ENCODE measurements at regions of chr7 and their contacts with region 1.

Region 1: DNA sequence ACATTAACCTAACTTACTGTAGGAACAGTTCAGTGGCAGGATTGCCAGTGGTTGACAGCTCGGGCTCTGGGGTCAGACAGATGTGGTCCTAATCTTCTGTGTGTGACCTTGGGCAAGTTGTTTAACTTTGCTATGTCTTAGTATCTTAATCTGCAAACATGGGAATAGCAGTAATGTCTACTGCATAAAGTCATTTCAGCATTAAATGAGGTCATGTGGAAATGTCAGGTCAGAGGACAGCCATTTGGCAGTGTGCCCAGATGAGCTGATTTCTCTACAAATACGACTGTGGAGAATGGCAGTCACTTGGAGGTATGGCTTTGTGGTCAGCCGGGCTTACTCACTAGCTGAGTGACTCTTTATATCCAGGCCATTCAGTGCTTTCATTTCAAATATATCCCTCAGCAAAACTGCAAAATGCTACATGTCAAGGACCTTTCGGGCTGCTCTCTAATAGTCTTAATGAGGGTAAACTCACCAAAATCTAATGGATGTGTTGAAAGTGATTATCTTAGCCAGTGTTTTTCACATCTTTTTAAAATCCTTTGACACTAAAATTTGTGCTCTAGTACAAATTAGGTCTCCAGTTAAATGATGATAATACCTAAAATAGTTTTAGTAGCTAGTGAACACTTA is 171.4 kb downstream of the ST7 start:
- DNase-seq: peak; percentile 79 to 85
- ATAC-seq: peak; percentile 97

Region 2: GRCh38 chr7:116929914-116930913 is 194.5 kb before region 1 on chr7:
- intact Hi-C with region 1: loop called in 1 of 2 experiments (anchors 5 kb)
- DNase-seq: peak; percentile 61 to 79
- ATAC-seq: peak; percentile 84

Region 3: GRCh38 chr7:116984917-116985316 is 139.8 kb before region 1 on chr7:
- intact Hi-C with region 1: loop called in 1 of 2 experiments (anchors 5 kb)
- DNase-seq: no peak
- ATAC-seq: peak; percentile 49

Region 4: DNA sequence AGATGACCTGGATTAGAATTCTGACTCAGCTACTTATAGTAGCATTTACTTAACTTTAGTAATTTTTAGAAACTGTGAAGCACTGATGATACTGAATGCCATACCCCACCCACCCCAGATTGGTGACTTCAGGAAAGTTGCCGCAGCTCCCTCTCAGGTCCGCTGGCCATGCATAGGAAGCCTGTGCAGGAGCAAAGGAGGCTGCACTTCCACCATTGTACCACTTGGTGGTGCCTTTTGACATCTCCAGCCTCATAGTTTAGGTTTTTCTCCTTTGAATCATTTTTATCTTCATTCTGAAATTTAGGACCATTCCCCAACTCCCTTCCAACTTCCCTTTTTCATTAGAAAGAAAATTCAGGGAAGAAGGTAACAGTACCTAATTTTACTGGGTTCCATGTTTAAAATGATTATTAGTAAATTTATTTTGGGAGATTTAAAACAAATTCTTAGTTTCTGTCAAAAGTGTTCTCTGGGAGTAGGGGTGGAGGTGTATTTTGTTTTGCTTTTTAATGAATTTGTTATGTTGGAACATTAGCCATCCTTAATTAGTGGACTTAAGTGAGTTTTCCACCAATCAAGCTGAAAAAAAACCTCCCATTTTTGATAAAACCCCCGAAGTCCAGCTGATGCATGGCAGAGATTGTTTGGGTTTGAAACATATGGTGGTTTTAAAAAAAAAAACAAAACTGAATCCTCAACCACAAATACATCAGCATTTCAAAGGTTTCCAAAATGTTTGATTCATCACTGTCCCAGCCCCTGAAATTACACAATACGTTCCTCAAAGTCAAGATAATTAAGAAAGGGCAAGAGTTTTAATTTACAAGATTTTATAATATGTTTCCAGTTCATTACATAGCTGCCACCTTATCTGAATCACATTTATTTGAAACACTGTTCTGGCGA is 88.5 kb after region 1 on chr7:
- intact Hi-C with region 1: no loop called
- DNase-seq: peak; percentile 32 to 61
- ATAC-seq: peak; percentile 60